Sigmoid colon (tissue), 7 donors: ENCODE measurements at regions of chr6 and their contacts with region 1.

Region 1: GRCh38 chr6:3162565-3163247 is 5.4 kb upstream of the TUBB2A start:
- DNase-seq: peak; percentile 90
- H3K4me3 ChIP-seq: peak overlapping the region; percentile 68 to 90 (median 80)
- H3K27ac ChIP-seq: peak overlapping the region; percentile 95 to 99 (median 96)
- H3K4me1 ChIP-seq: peaks cover 0 to 30% (median 12%) of the 10 kb centered on the region in 4 donors
- H3K27me3 ChIP-seq: no peaks in the 10 kb centered on the region
- CTCF ChIP-seq: peak in 2 of 4 experiments; percentile 14 to 34
- EP300 ChIP-seq: no peak
- POLR2A ChIP-seq: peak; percentile 56 to 66

Region 2: GRCh38 chr6:3139090-3139903 is 23.4 kb before region 1 on chr6:
- intact Hi-C with region 1: no loop called
- DNase-seq: peak; percentile 88
- H3K4me3 ChIP-seq: no peak overlapping the region
- H3K27ac ChIP-seq: peak overlapping the region in 3 of 4 donors; percentile 49 to 70 (median 50)
- H3K4me1 ChIP-seq: peaks cover 0 to 17% (median 7%) of the 10 kb centered on the region in 4 donors
- H3K27me3 ChIP-seq: no peaks in the 10 kb centered on the region
- CTCF ChIP-seq: no peak
- EP300 ChIP-seq: no peak
- POLR2A ChIP-seq: no peak

Region 3: GRCh38 chr6:3209114-3210023 is 46.7 kb after region 1 on chr6:
- intact Hi-C with region 1: loop called (anchors 5 kb)
- DNase-seq: no peak
- H3K4me3 ChIP-seq: no peak overlapping the region
- H3K27ac ChIP-seq: peak overlapping the region; percentile 12 to 76 (median 28)
- H3K4me1 ChIP-seq: peaks cover 0 to 29% (median 21%) of the 10 kb centered on the region in 4 donors
- H3K27me3 ChIP-seq: no peaks in the 10 kb centered on the region
- CTCF ChIP-seq: no peak
- EP300 ChIP-seq: no peak
- POLR2A ChIP-seq: no peak